Mammary epithelial cell (primary cell): ENCODE measurements at regions of chr5 and their contacts with region 1.

Region 1: GRCh38 chr5:132238169-132238744 is 10.6 kb upstream of the P4HA2 start:
- DNase-seq: peak; percentile 50
- H3K4me3 ChIP-seq: no peak overlapping the region
- H3K27ac ChIP-seq: no peak overlapping the region
- H3K4me1 ChIP-seq: peaks cover 12% of the 10 kb centered on the region
- H3K27me3 ChIP-seq: no peaks in the 10 kb centered on the region
- CTCF ChIP-seq: peak; percentile 76 to 89

Region 2: DNA sequence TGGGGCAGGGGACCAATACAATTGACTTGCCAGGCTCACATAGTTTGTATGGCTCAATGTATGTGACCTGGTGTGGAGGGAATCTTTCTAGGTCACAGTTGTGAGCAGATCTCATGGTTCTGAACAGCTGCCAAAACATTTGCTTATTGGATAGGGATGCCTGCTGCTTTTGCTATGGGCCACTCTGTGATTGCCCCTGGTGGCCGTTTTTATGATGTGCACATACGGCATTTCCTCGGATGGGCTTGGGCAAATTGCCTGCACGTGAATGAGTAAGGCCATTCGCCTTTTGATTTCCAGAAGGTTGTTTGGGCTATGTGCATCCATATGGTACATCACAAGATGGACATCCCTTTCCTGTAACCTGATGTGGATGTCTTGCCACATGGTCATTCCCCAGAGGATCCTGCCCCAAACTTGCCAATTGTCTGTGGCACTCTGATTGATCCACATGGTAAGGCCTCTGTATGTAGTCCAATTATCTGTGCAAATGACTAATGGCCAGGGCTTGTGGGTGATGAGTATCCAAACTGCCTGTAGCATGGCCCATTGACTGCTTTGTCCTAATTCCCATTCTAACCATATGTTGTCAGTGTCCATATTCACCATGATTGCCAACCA is 45.3 kb after region 1 on chr5:
- CTCF ChIA-PET with region 1: no interaction called
- dilution Hi-C with region 1: no loop called
- in situ Hi-C with region 1: no loop called
- intact Hi-C with region 1: loop called (anchors 5 kb)
- DNase-seq: peak; percentile 48
- H3K4me3 ChIP-seq: no peak overlapping the region
- H3K27ac ChIP-seq: no peak overlapping the region
- H3K4me1 ChIP-seq: peaks cover 3% of the 10 kb centered on the region
- H3K27me3 ChIP-seq: no peaks in the 10 kb centered on the region
- CTCF ChIP-seq: peak; percentile 58 to 77

Region 3: GRCh38 chr5:133145436-133146170 is 907.3 kb after region 1 on chr5:
- CTCF ChIA-PET with region 1: no interaction called
- dilution Hi-C with region 1: no loop called
- in situ Hi-C with region 1: no loop called
- intact Hi-C with region 1: no loop called
- DNase-seq: no peak
- H3K4me3 ChIP-seq: no peak overlapping the region
- H3K27ac ChIP-seq: no peak overlapping the region
- H3K4me1 ChIP-seq: no peaks in the 10 kb centered on the region
- H3K27me3 ChIP-seq: no peaks in the 10 kb centered on the region
- CTCF ChIP-seq: no peak